ENCODE measurements at regions of chr1 and their contacts with region 1.

Region 1: DNA sequence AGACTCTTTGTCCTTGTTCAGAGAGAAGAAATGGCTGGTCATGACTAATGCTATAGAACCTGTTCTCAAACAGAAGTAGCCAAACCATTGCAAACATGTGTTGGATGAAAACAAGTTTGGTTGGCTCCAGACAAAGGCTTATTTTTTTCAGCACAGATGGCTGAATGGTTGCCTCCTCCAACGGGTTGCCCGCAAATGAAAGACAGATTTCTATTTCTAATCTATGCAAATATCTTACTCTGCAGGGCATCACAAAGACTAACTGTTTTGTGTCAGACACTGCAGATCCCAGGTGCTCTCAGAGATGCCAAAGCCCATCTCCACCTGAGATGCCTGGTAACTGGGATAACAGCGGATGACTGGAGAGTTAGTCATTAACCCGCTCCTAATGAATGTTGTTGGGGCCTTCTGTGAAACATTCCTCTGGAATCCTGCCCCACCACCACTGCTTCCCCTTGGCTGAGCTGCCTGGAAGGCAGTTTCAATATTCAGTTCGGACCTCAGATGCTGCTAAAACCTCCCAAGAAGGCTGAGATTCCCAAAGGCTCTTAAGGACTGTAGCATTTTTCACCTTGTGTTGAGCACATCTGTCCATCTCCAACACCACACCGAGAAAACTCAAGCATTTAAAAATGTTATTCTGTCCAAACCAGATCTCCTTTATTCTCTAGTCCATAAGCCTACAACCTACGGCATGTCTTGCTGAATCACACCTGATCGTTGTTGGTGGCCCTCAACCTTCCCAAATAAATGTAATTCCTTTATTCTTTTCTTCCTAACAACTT is 104.4 kb downstream of the PTPN14 start:
- DNase-seq: peak; percentile 88
- H3K4me3 ChIP-seq: peak overlapping the region in 1 of 3 experiments; percentile 33
- H3K27ac ChIP-seq: peak overlapping the region; percentile 88
- H3K4me1 ChIP-seq: peaks cover 41% of the 10 kb centered on the region
- H3K27me3 ChIP-seq: no peaks in the 10 kb centered on the region
- CTCF ChIP-seq: no peak
- POLR2A ChIP-seq: peak; percentile 56

Region 2: GRCh38 chr1:214396330-214396729 is 50.6 kb before region 1 on chr1:
- CTCF ChIA-PET with region 1: no interaction called
- POLR2A ChIA-PET with region 1: no interaction called
- dilution Hi-C with region 1: no loop called
- intact Hi-C with region 1: no loop called
- DNase-seq: no peak
- H3K4me3 ChIP-seq: no peak overlapping the region
- H3K27ac ChIP-seq: no peak overlapping the region
- H3K4me1 ChIP-seq: no peaks in the 10 kb centered on the region
- H3K27me3 ChIP-seq: no peaks in the 10 kb centered on the region
- CTCF ChIP-seq: no peak
- POLR2A ChIP-seq: no peak

Region 3: DNA sequence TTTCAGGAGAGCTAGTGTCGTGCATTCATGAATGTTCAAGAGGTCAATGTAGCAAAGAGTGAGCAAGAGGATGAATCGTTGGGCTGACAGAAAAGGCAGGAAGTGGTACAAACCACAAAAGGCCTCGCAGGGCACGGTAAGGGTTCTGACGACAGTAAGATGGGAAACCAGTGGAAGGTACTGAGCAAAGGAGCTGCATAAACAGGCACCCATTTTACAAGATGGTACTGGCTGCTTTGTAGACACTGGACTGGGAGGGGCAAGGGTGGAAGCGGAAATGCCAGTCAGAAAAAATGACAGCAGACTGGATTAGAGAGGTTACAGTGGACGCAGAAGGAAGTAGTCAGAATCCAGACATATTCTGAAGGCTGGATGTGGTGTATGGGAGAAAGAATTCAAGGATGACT is 19.1 kb before region 1 on chr1:
- CTCF ChIA-PET with region 1: interaction called, 3 read pairs
- POLR2A ChIA-PET with region 1: no interaction called
- dilution Hi-C with region 1: no loop called
- intact Hi-C with region 1: loop called (anchors 1 kb)
- DNase-seq: peak; percentile 81
- H3K4me3 ChIP-seq: no peak overlapping the region
- H3K27ac ChIP-seq: peak overlapping the region; percentile 68
- H3K4me1 ChIP-seq: peaks cover 39% of the 10 kb centered on the region
- H3K27me3 ChIP-seq: no peaks in the 10 kb centered on the region
- CTCF ChIP-seq: no peak
- POLR2A ChIP-seq: peak; percentile 39

Region 4: DNA sequence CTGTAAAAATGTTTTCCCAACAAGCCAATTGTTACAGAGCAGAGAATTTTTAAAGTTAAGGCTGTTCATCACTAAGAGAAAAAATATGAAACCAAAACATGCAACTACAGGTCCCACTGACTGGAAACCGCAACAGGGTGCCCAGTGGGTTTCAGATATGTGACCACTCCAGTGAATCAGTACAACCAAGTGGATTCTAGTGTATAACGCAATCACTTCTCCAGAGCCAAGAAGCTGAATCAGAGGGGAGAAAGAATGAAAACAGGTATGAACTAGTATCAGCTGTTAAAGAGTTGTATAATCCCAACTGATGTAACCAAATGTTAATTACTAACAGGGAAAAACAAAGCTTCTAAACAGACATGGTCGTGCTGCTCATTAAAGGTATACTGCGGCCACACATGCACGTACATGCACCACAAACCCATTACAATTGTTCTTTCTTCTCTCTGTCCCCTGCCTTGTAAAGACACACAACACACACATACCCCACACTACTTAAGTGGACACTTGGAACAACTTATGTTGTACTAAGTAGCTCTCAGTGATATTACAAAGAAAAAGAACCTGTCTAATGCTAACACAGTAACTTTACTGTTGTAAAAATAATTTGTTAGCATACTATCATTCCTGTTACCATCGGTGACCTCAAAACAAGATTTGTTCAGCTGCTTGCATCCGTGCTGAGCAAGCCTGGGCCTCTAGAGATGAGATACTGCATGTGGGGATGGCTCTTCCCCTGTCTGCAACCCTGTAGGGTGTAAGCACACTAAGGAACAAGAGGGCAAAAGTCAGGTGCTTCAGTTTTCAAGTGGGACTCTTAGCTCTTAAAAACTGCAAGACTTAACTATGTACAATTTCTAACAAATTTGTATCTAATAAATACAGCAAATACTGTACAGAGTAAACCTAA is 30.2 kb after region 1 on chr1:
- CTCF ChIA-PET with region 1: no interaction called
- POLR2A ChIA-PET with region 1: no interaction called
- dilution Hi-C with region 1: no loop called
- intact Hi-C with region 1: loop called (anchors 2 kb)
- DNase-seq: peak; percentile 75
- H3K4me3 ChIP-seq: peak overlapping the region in 1 of 3 experiments; percentile 15
- H3K27ac ChIP-seq: peak overlapping the region; percentile 70
- H3K4me1 ChIP-seq: peaks cover 28% of the 10 kb centered on the region
- H3K27me3 ChIP-seq: no peaks in the 10 kb centered on the region
- CTCF ChIP-seq: no peak
- POLR2A ChIP-seq: no peak

Measured in endothelial cell of umbilical vein (primary cell).